GM10248 (cell line): ENCODE measurements at regions of chr6 and their contacts with region 1.

Region 1: DNA sequence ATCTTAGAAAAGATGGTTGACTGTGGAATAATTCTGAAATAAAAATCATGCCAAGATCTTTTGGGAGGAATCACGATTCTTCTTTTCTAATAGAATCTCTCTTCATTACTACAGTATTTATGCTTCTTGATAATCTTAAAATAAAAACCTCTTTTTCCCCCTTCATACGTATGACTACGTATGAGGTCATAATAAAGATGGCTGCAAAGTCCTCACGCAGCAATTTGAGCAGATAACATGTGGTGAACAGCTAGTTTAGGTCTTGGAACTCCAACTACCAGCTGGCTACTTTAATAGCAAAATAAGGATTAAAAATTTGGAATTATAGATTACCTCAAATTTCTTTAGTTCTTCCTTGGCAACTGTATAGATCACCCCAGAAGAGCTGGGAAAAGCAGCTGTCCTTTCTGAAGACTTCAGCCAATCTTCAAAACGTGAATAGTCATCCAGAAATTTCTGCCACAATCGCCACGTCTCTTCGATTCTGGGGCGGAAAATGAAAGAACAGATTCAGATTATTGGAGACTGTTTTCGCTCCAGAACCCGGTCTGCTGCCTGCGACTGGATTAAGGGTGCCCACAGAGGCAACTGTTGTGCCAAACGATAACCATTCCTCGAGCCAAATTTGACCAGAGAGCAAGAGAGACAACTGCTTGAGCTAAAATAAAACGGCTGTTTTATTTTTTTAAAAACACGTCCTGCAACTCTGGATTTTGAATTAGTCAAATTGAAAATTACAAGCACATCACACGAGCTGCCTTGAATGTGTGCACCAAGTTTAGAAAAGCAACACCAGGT is 347.3 kb downstream of the ESR1 start:
- DNase-seq: no peak
- CTCF ChIP-seq: no peak

Region 2: DNA sequence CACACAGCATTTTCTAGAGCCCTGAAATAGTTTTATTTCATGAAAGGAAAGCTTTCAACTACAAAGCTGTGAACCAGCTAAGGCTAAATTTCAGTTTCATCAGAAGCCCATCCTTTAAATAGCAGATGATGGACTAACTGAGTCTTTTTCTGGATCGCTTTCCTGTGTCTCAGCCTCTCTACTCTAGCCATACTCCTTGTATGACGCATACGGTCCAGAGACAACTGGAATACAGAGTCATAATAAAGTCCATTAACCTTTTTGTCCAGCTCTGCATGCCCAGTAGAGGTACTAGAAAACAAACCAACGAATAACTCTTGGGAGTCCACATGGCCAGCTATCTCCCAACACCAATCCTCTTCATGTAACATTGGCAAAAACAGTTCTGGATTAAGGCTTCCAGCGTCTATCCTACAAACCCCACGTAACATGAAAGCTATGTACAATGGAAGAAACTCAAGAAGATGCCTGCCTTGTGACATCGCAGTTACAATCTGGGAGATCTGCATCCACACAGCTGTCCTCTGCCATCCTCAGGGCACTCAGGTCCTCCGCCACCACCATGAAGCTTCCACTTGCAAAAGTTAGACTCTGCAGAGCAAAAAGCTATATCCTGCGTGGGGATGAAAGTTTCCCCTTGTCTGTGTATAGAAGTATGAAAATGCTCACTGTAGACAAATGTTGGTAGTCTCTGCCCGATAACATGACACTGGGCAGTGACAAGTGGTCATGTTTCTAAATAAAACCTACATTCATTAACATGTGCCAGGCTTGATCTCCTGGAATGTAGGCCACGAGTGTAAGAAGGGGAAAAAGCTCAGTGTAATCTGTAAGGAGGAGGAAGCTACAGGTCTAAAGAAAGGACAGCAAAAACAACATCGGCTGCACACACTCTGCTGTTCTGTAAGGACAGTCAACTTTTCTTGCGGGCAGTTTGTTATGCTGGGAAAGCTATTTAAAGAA is 13.2 kb after region 1 on chr6:
- CTCF ChIA-PET with region 1: interaction called, 14 read pairs
- POLR2A ChIA-PET with region 1: no interaction called
- DNase-seq: no peak
- CTCF ChIP-seq: no peak